CD8-positive, alpha-beta T cell (primary cell): ENCODE measurements at regions of chr3 and their contacts with region 1.

Region 1: DNA sequence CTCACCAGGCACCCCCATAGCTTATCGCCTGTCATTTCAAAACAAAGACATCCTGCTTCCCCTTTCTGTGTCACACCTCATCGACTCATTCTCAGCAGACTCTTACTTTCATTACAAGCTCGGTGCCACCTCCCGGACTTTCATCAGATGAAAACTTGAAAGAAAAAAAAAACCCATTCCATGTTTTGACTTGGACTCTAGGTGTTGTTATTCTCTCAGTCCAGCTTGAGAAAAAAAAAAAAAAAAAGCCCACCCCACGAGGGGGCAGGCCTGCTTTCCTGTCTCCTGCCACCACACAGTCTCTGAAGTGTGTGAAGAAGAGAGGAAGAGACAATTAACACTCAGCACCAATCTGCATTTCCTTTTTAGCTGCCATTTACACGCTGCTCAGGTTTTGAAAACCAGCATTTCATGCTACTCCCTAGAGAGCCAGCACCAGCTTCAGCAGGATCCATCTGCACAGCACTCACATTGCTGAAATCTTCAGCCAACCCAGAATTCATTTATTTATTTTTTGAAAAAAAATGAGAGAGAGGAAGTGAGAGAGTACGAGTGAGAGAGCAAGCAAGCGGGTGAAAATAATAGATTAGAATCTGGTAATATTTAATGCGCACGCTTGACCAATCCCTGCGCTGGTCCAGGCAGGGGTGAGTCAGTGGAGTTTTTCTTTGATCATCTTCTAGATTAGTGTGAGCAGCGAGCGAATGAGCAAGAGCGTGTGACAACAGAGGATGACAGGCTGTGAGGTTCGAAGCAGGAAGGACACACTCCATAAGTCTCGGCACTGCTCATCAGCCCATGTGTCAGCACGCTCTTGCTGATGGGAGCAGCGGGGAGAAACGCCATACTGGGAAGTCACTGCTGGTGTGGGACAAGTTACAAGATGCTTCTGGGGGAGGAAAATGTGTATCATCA is 23.5 kb downstream of the ZNF80 start:
- DNase-seq: peak; percentile 35 to 92 (median 74)
- ATAC-seq: peak; percentile 45
- H3K4me3 ChIP-seq: peak overlapping the region; percentile 55
- H3K4me3 Mint-ChIP-seq: no peak overlapping the region
- H3K27ac ChIP-seq: peak overlapping the region; percentile 91 to 96
- H3K27ac Mint-ChIP-seq: no peak overlapping the region
- H3K4me1 ChIP-seq: peaks cover 60% of the 10 kb centered on the region
- H3K4me1 Mint-ChIP-seq: peaks cover 3% of the 10 kb centered on the region
- H3K27me3 ChIP-seq: no peaks in the 10 kb centered on the region
- H3K27me3 Mint-ChIP-seq: no peaks in the 10 kb centered on the region
- CTCF ChIP-seq: peak; percentile 38

Region 2: GRCh38 chr3:113531826-113532697 is 681.8 kb before region 1 on chr3 and contains the start of gene SIDT1:
- CTCF ChIA-PET with region 1: no interaction called
- POLR2A ChIA-PET with region 1: no interaction called
- intact Hi-C with region 1: loop called (anchors 5 to 10 kb)
- DNase-seq: peak; percentile 50 to 90 (median 73)
- ATAC-seq: peak; percentile 77
- H3K4me3 ChIP-seq: peak within 1 kb of the TSS; percentile 83 to 93
- H3K4me3 Mint-ChIP-seq: peak within 1 kb of the TSS; percentile 96
- H3K27ac ChIP-seq: peak within 1 kb of the TSS; percentile 87 to 93
- H3K27ac Mint-ChIP-seq: peak within 1 kb of the TSS; percentile 97
- H3K4me1 ChIP-seq: peaks cover 43% of the 10 kb centered on the region
- H3K4me1 Mint-ChIP-seq: peaks cover 52% of the 10 kb centered on the region
- H3K27me3 ChIP-seq: no peaks in the 10 kb centered on the region
- H3K27me3 Mint-ChIP-seq: no peaks in the 10 kb centered on the region
- CTCF ChIP-seq: no peak
- total RNA-seq, gene SIDT1: 32.1 to 38.3 TPM

Region 3: GRCh38 chr3:114056130-114057010 is 157.5 kb before region 1 on chr3 and contains the starts of genes CCDC191 and QTRT2:
- CTCF ChIA-PET with region 1: no interaction called
- POLR2A ChIA-PET with region 1: interaction called, 3 read pairs
- intact Hi-C with region 1: loop called (anchors 1 to 5 kb)
- DNase-seq: peak; percentile 94 to 100 (median 98)
- ATAC-seq: peak; percentile 95
- H3K4me3 ChIP-seq: peak within 1 kb of the TSS; percentile 70 to 96
- H3K4me3 Mint-ChIP-seq: peak within 1 kb of the TSS; percentile 94
- H3K27ac ChIP-seq: peak within 1 kb of the TSS; percentile 84 to 97
- H3K27ac Mint-ChIP-seq: peak within 1 kb of the TSS; percentile 98
- H3K4me1 ChIP-seq: peaks cover 20% of the 10 kb centered on the region
- H3K4me1 Mint-ChIP-seq: peaks cover 53% of the 10 kb centered on the region
- H3K27me3 ChIP-seq: no peaks in the 10 kb centered on the region
- H3K27me3 Mint-ChIP-seq: no peaks in the 10 kb centered on the region
- CTCF ChIP-seq: no peak
- total RNA-seq, gene CCDC191: 2.8 to 2.9 TPM
- total RNA-seq, gene QTRT2: 31.7 to 36.6 TPM

Region 4: DNA sequence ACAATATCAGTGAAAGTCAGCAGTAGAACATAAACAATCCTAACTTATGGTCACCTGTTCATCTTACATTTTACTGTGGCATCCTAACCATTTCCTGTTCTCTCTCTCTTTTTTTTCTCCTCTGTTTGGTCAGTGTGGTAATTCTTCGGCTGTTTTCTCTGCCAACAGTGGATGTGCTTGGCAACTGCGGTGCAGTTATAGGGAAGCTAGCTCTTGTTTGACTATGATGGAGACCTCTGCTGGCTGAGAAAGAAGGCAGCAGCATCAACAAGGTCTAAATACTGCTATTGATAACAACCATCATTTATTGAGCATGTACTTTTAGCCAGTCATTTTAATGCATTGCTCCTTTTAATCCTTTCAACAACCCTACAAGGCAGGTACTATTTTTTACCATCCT is 34.3 kb before region 1 on chr3:
- CTCF ChIA-PET with region 1: interaction called, 3 read pairs
- POLR2A ChIA-PET with region 1: interaction called, 4 read pairs
- intact Hi-C with region 1: loop called in 1 of 2 experiments (anchors 5 kb)
- DNase-seq: peak in 2 of 9 experiments; percentile 32 to 49
- ATAC-seq: no peak
- H3K4me3 ChIP-seq: no peak overlapping the region
- H3K4me3 Mint-ChIP-seq: no peak overlapping the region
- H3K27ac ChIP-seq: no peak overlapping the region
- H3K27ac Mint-ChIP-seq: no peak overlapping the region
- H3K4me1 ChIP-seq: no peaks in the 10 kb centered on the region
- H3K4me1 Mint-ChIP-seq: peaks cover 3% of the 10 kb centered on the region
- H3K27me3 ChIP-seq: no peaks in the 10 kb centered on the region
- H3K27me3 Mint-ChIP-seq: peaks cover 3% of the 10 kb centered on the region
- CTCF ChIP-seq: peak; percentile 23

Region 5: DNA sequence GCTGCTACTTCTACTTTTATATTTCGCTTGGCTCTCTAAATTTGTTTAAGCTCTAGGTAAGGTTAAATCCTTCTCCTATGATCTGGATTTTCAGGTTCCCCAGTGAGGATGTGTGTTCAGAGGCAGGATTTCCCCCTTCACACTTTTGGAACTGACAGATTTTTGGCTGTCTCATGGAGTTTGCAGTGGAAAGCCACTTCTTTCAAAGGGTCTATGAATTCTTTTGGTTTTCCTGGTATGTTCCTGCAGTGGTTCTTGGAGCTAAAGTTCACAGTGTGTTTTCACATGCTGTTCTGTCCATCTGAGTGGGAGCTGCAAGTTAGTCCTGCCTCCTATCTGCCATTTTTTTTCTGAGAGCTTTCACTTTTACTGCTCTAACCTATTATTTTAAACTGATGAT is 58.4 kb after region 1 on chr3:
- CTCF ChIA-PET with region 1: no interaction called
- POLR2A ChIA-PET with region 1: interaction called, 15 read pairs
- intact Hi-C with region 1: no loop called
- DNase-seq: no peak
- ATAC-seq: no peak
- H3K4me3 ChIP-seq: no peak overlapping the region
- H3K4me3 Mint-ChIP-seq: no peak overlapping the region
- H3K27ac ChIP-seq: no peak overlapping the region
- H3K27ac Mint-ChIP-seq: no peak overlapping the region
- H3K4me1 ChIP-seq: no peaks in the 10 kb centered on the region
- H3K4me1 Mint-ChIP-seq: no peaks in the 10 kb centered on the region
- H3K27me3 ChIP-seq: no peaks in the 10 kb centered on the region
- H3K27me3 Mint-ChIP-seq: no peaks in the 10 kb centered on the region
- CTCF ChIP-seq: no peak

Region 6: GRCh38 chr3:114290911-114291901 is 77.3 kb after region 1 on chr3:
- CTCF ChIA-PET with region 1: interaction called, 29 read pairs
- POLR2A ChIA-PET with region 1: interaction called, 112 read pairs
- intact Hi-C with region 1: loop called (anchors 1 kb)
- DNase-seq: peak; percentile 86 to 97 (median 93)
- ATAC-seq: peak; percentile 76
- H3K4me3 ChIP-seq: peak overlapping the region in 1 of 2 experiments; percentile 48
- H3K4me3 Mint-ChIP-seq: peak overlapping the region; percentile 80
- H3K27ac ChIP-seq: peak overlapping the region; percentile 60 to 89
- H3K27ac Mint-ChIP-seq: peak overlapping the region; percentile 96
- H3K4me1 ChIP-seq: peaks cover 27% of the 10 kb centered on the region
- H3K4me1 Mint-ChIP-seq: peaks cover 43% of the 10 kb centered on the region
- H3K27me3 ChIP-seq: no peaks in the 10 kb centered on the region
- H3K27me3 Mint-ChIP-seq: no peaks in the 10 kb centered on the region
- CTCF ChIP-seq: peak; percentile 87

Region 7: DNA sequence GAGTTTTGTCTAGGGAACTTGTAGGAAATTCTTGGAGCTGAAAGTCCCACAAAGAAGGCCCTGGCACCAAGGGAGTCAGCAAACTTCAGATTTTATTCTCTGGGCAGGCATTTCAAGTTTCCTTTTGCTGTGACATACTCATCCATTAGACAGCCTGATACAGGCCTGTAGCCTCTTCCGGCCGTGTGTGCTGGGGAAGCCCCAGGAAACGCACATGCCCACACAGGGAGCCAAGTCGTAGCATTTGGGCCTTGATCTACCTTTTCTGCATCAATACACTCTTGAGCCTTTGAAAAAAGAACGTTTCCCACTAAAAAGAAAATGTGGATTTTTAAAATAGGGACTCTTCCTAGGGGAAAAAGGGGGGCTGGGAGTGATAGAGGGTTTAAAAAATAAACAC is 94.9 kb after region 1 on chr3:
- CTCF ChIA-PET with region 1: interaction called, 4 read pairs
- POLR2A ChIA-PET with region 1: interaction called, 40 read pairs
- intact Hi-C with region 1: no loop called
- DNase-seq: peak; percentile 14 to 88 (median 51)
- ATAC-seq: peak; percentile 82
- H3K4me3 ChIP-seq: no peak overlapping the region
- H3K4me3 Mint-ChIP-seq: peak overlapping the region; percentile 38
- H3K27ac ChIP-seq: peak overlapping the region; percentile 55 to 91
- H3K27ac Mint-ChIP-seq: peak overlapping the region; percentile 87
- H3K4me1 ChIP-seq: peaks cover 30% of the 10 kb centered on the region
- H3K4me1 Mint-ChIP-seq: peaks cover 56% of the 10 kb centered on the region
- H3K27me3 ChIP-seq: no peaks in the 10 kb centered on the region
- H3K27me3 Mint-ChIP-seq: no peaks in the 10 kb centered on the region
- CTCF ChIP-seq: no peak